CD8-positive, alpha-beta T cell (primary cell): ENCODE measurements at regions of chr3 and their contacts with region 1.

Region 1: GRCh38 chr3:129942296-129942695 is 32.2 kb upstream of the TRH start:
- DNase-seq: peak in 5 of 9 experiments; percentile 23 to 54 (median 26)
- ATAC-seq: peak; percentile 65
- H3K4me3 ChIP-seq: no peak overlapping the region
- H3K4me3 Mint-ChIP-seq: no peak overlapping the region
- H3K27ac ChIP-seq: no peak overlapping the region
- H3K27ac Mint-ChIP-seq: no peak overlapping the region
- H3K4me1 ChIP-seq: no peaks in the 10 kb centered on the region
- H3K4me1 Mint-ChIP-seq: no peaks in the 10 kb centered on the region
- H3K27me3 ChIP-seq: no peaks in the 10 kb centered on the region
- H3K27me3 Mint-ChIP-seq: peaks cover 7% of the 10 kb centered on the region
- CTCF ChIP-seq: peak; percentile 37

Region 2: GRCh38 chr3:129343643-129344332 is 598.5 kb before region 1 on chr3:
- CTCF ChIA-PET with region 1: no interaction called
- POLR2A ChIA-PET with region 1: no interaction called
- intact Hi-C with region 1: no loop called
- DNase-seq: peak in 5 of 9 experiments; percentile 12 to 51 (median 25)
- ATAC-seq: peak; percentile 72
- H3K4me3 ChIP-seq: peak overlapping the region; percentile 15 to 21
- H3K4me3 Mint-ChIP-seq: peak overlapping the region; percentile 42
- H3K27ac ChIP-seq: no peak overlapping the region
- H3K27ac Mint-ChIP-seq: no peak overlapping the region
- H3K4me1 ChIP-seq: peaks cover 4% of the 10 kb centered on the region
- H3K4me1 Mint-ChIP-seq: peaks cover 3% of the 10 kb centered on the region
- H3K27me3 ChIP-seq: peaks cover 0 to 7% of the 10 kb centered on the region in 2 experiments
- H3K27me3 Mint-ChIP-seq: peaks cover 16% of the 10 kb centered on the region
- CTCF ChIP-seq: peak; percentile 37

Region 3: GRCh38 chr3:129994883-129995559 is 52.7 kb after region 1 on chr3:
- CTCF ChIA-PET with region 1: no interaction called
- POLR2A ChIA-PET with region 1: no interaction called
- intact Hi-C with region 1: loop called in 1 of 2 experiments (anchors 5 kb)
- DNase-seq: no peak
- ATAC-seq: no peak
- H3K4me3 ChIP-seq: no peak overlapping the region
- H3K4me3 Mint-ChIP-seq: no peak overlapping the region
- H3K27ac ChIP-seq: no peak overlapping the region
- H3K27ac Mint-ChIP-seq: no peak overlapping the region
- H3K4me1 ChIP-seq: no peaks in the 10 kb centered on the region
- H3K4me1 Mint-ChIP-seq: no peaks in the 10 kb centered on the region
- H3K27me3 ChIP-seq: no peaks in the 10 kb centered on the region
- H3K27me3 Mint-ChIP-seq: peaks cover 17% of the 10 kb centered on the region
- CTCF ChIP-seq: no peak

Region 4: GRCh38 chr3:130111185-130111864 is 169.0 kb after region 1 on chr3:
- CTCF ChIA-PET with region 1: interaction called, 3 read pairs
- POLR2A ChIA-PET with region 1: no interaction called
- intact Hi-C with region 1: loop called in 1 of 2 experiments (anchors 5 kb)
- DNase-seq: peak; percentile 97 to 100 (median 99)
- ATAC-seq: peak; percentile 100
- H3K4me3 ChIP-seq: peak overlapping the region; percentile 69 to 89
- H3K4me3 Mint-ChIP-seq: peak overlapping the region; percentile 99
- H3K27ac ChIP-seq: peak overlapping the region; percentile 82 to 95
- H3K27ac Mint-ChIP-seq: peak overlapping the region; percentile 100
- H3K4me1 ChIP-seq: peaks cover 3% of the 10 kb centered on the region
- H3K4me1 Mint-ChIP-seq: peaks cover 28% of the 10 kb centered on the region
- H3K27me3 ChIP-seq: no peaks in the 10 kb centered on the region
- H3K27me3 Mint-ChIP-seq: no peaks in the 10 kb centered on the region
- CTCF ChIP-seq: no peak